AG04449 (cell line): ENCODE measurements at regions of chr2 and their contacts with region 1.

Region 1: DNA sequence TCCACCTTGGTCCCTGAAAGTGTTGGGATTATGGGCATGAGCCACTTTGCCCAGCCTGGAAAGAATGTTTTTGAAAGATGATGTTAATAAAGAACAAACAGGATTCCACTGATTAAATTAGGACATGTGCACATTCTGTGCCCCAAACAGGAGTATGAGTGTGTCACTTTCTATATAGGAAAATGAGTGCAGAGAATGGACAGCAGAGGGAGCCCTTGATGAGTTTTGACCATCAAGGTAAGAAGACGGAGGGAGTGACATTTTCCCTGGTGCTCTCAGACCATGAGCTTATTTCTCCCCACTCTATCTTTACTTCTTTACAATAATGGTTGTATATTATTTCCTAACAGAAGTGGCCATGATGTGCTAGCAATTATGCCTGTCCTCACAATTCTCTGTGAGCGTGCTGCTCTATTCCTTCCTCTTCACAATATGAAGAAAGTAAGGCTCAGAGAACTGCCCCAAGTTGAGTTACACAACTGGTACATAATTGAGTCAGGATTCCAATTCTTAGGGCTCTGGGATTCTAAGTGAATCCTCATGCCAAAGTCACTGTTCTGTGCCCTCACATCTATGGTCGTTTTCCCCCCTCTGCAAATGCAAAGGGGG is 20.6 kb downstream of the RPL37A start:
- DNase-seq: no peak
- H3K4me3 ChIP-seq: no peak overlapping the region
- CTCF ChIP-seq: peak; percentile 67

Region 2: GRCh38 chr2:216108967-216109921 is 410.0 kb before region 1 on chr2 and contains the start of gene XRCC5:
- CTCF ChIA-PET with region 1: interaction called, 35 read pairs
- POLR2A ChIA-PET with region 1: no interaction called
- DNase-seq: peak; percentile 76
- H3K4me3 ChIP-seq: peak within 1 kb of the TSS; percentile 94
- CTCF ChIP-seq: no peak

Region 3: DNA sequence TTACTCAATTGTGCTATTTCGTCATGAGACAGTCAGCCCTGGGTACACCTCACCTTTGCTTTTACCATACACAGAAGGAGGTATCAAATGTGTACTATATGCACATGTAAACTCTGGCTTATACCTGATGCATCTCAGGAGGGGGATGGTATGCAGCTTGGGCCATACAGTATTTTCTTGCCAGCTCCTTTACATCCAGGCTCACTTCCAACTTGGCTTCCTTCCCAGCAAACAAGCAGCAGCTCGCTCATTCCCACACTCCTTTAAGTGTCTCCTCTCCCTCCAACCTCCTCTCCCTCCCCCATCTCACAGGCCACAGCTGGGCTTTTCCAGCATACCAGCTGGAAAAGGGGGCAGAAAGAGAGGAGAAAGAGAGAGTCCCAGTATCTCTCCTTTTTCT is 156.5 kb before region 1 on chr2:
- CTCF ChIA-PET with region 1: no interaction called
- POLR2A ChIA-PET with region 1: no interaction called
- DNase-seq: peak; percentile 74
- H3K4me3 ChIP-seq: no peak overlapping the region
- CTCF ChIP-seq: no peak

Region 4: DNA sequence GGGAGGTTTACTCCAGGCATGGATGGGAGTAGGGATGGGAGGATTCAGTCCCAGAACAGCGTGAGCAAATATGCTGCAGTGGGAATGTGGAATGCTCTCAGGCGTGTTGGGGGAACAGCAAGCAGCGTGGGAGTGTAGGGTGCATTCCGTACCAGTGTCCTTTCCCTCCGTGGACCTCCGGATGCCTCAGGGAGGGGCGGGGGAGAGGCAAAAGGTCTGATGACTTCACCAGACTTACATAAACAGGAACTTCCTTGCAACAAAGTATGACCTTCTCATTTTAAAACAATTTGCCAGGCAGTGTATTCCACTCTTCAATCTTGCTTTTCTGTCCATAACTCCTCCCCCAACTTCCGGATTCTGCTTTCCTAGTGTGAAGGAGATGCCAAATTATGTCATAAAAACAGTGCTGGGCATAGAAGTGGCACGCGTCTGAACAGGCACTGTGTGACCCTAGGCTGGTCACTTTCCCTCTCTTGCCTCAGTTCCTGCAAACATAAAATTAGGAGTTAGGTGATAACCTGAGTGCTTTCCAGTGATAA is 16.3 kb after region 1 on chr2:
- CTCF ChIA-PET with region 1: interaction called, 43 read pairs
- POLR2A ChIA-PET with region 1: no interaction called
- DNase-seq: peak; percentile 95
- H3K4me3 ChIP-seq: no peak overlapping the region
- CTCF ChIP-seq: no peak

Region 5: DNA sequence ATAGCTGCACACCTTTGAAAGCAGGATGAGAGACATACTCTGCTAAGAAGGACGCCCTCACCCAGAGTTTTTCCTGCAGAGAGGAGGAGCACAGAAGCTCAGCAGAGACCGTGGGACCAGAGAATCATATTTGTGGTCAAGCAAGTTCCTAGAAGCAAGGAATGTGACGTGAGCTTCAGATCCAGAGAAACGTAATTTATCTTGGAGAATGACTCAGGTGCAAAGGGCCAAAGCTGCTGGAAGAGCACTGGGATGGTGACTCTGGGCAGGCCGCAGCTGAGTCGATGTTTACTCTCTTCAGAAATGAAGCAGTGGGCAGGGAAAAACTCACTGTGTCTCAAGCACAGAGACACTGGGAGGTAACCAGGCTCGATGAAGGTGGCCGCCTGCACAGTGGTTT is 63.9 kb after region 1 on chr2:
- CTCF ChIA-PET with region 1: interaction called, 19 read pairs
- POLR2A ChIA-PET with region 1: no interaction called
- DNase-seq: peak; percentile 86
- H3K4me3 ChIP-seq: no peak overlapping the region
- CTCF ChIP-seq: no peak

Region 6: DNA sequence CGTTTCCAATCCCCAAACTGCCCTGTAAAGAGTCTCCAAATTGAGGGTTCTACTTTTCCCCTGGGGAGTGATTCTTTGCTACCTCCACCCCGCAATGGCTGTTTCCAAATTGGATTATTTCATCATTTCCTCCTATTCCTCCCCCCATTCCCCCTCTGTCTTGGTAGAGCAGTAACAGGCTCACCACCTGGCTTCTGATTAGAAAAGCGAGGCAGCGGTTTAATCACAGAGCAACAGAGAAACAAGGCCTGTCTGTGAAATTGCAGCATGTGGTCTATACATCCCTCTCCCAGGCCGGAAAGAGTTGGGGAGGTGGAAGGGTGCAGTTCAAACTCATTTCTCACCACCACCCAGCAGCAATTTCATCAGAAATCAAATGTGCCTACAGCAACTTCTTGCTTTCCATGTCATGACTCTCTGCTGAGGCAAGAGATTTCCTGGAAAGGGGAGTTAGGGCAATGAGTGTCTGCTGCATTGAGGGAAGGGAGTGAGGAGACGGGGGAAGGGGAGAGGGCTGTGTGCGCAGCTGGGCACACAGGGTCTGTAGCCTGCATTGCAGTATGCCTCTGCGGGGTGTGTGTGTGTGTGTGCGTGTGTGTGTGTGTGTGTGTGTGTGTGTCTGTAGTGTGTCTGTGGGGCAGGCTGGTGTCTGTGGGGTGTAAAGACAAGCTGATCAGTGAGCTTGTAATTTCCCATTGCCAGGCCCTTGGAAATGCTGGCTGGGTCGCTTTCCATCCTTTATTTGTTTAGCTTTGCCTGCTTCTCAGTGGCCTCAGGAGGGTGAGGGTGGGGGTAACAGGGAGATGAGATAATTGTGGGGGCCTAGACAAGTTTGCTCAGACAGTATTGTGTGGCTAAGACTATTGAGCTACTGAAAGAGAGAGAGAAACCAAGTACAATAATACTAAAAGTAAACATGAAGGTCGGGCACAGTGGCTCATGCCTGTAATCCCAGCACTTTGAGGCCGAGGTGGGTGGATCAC is 100.4 kb after region 1 on chr2:
- CTCF ChIA-PET with region 1: interaction called, 11 read pairs
- POLR2A ChIA-PET with region 1: no interaction called
- DNase-seq: peak; percentile 19
- H3K4me3 ChIP-seq: no peak overlapping the region
- CTCF ChIP-seq: no peak

Region 7: GRCh38 chr2:216666461-216667233 is 147.4 kb after region 1 on chr2:
- CTCF ChIA-PET with region 1: interaction called, 1,277 read pairs
- POLR2A ChIA-PET with region 1: interaction called, 4 read pairs
- DNase-seq: no peak
- H3K4me3 ChIP-seq: no peak overlapping the region
- CTCF ChIP-seq: peak; percentile 88

Region 8: GRCh38 chr2:216765761-216766262 is 246.6 kb after region 1 on chr2:
- CTCF ChIA-PET with region 1: no interaction called
- POLR2A ChIA-PET with region 1: no interaction called
- DNase-seq: no peak
- H3K4me3 ChIP-seq: no peak overlapping the region
- CTCF ChIP-seq: no peak

Region 9: DNA sequence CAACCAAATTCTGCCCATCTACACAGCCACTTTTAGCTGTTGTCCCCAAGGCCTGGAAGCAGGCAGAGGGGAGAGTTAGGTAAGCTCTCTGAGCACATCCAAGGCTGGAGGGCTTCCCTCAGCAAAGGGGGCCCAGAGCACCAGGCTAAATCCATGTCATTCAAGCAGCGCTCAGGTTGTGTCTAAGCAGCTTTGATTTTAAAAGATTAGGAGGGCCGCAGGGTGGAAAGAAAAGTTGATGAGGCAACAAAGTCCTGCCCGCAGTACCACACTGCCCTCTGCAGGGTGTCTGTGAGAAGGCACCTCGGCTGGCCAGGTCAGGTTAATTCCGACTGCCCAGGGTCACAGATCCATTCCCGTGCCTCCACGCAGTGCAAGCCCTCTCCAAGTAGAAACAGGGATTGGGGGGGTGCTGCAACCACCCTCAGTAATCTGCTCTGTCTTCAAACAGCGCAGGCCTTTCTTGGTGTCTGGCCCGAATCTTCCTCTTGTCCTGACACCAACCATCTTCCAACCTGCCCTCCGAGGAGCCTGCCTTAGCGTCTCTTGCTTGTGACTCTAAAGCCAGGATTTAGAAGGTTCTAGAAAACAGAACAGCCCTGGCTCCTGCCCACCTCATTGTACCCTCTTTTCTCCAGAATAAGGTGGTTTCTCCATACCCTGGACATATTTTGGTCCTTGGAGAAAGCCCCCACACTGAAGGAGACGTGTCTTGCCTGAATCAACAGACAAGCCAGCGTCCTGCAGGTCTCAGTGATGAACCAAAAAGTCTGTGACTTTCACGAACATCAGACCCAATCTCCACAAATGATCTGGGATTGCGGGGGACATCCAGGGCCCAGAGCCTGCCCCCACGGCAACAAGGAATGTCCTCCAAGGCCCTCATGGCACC is 1194.4 kb after region 1 on chr2:
- CTCF ChIA-PET with region 1: interaction called, 10 read pairs
- POLR2A ChIA-PET with region 1: no interaction called
- DNase-seq: no peak
- H3K4me3 ChIP-seq: no peak overlapping the region
- CTCF ChIP-seq: peak; percentile 95